BJ (cell line): ENCODE measurements at regions of chr10 and their contacts with region 1.

Region 1: DNA sequence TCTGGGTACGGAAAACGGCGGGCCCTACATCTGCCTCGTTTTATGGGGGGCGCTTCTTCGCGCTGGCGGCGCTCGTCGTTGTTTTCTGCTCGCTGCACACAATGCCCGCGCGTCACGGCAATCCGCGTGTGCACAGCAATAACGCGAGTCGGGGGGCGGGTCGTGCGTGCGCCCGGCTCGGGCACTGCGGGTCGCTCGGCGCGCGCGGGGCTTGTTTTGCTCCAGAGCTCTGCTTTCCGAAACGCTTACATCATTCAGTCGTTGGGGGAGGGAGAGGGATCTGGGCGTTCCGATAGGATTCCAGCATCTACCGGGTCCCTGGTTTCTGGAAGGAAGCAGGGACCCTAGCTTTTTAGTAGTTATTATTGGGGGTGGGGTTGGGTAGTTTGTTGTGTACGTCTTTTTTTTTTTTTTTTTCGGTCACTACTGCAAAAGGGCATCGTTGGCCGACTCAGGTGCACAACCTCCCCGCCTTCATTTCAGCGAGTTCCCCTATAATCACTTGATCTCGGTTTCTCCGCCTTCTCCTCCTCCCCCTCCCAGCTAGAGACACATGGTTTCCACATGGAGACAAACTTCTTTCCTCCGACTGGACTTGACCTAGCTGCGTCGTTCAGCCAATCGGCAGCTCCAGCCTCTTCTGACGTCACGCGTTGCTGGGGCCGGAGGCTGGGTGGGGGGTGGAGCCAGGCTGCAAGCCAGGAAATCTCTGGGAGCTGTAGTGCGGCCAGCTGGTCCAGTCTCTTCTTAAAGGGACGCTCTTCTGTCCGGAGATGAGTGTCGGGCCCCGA is 3.5 kb downstream of the MXI1 start:
- DNase-seq: peak; percentile 92
- H3K4me3 ChIP-seq: peak overlapping the region; percentile 75
- H3K27me3 ChIP-seq: no peaks in the 10 kb centered on the region
- CTCF ChIP-seq: no peak

Region 2: GRCh38 chr10:110058212-110058611 is 152.7 kb before region 1 on chr10:
- CTCF ChIA-PET with region 1: no interaction called
- POLR2A ChIA-PET with region 1: no interaction called
- DNase-seq: no peak
- H3K4me3 ChIP-seq: no peak overlapping the region
- H3K27me3 ChIP-seq: no peaks in the 10 kb centered on the region
- CTCF ChIP-seq: no peak

Region 3: DNA sequence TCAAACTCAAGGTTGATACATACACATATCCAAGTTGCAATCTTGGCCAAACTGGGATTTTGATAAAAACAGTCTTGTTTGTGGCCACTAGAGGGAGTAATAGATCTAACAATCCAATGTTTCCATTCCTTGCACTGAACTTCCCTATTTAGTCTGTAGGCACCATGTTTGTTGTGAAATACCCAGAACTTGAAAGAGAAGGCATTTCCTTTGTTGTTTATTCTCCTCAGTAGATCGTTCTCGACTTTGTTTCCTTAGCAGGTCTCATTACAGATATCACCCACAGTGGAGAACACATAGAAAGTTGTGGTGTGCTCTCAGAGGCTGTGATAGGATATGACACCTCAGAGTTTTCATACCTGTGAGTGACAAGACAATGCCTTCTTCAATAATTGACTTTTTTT is 73.7 kb before region 1 on chr10:
- CTCF ChIA-PET with region 1: interaction called, 15 read pairs
- POLR2A ChIA-PET with region 1: no interaction called
- DNase-seq: peak; percentile 26
- H3K4me3 ChIP-seq: no peak overlapping the region
- H3K27me3 ChIP-seq: no peaks in the 10 kb centered on the region
- CTCF ChIP-seq: peak; percentile 62

Region 4: GRCh38 chr10:110221721-110222261 is 10.9 kb after region 1 on chr10:
- CTCF ChIA-PET with region 1: interaction called, 10 read pairs
- POLR2A ChIA-PET with region 1: interaction called, 6 read pairs
- DNase-seq: peak; percentile 77
- H3K4me3 ChIP-seq: peak overlapping the region; percentile 48
- H3K27me3 ChIP-seq: no peaks in the 10 kb centered on the region
- CTCF ChIP-seq: peak; percentile 45

Region 5: GRCh38 chr10:110279407-110279986 is 68.6 kb after region 1 on chr10:
- CTCF ChIA-PET with region 1: interaction called, 11 read pairs
- POLR2A ChIA-PET with region 1: no interaction called
- DNase-seq: no peak
- H3K4me3 ChIP-seq: no peak overlapping the region
- H3K27me3 ChIP-seq: no peaks in the 10 kb centered on the region
- CTCF ChIP-seq: peak; percentile 71

Region 6: DNA sequence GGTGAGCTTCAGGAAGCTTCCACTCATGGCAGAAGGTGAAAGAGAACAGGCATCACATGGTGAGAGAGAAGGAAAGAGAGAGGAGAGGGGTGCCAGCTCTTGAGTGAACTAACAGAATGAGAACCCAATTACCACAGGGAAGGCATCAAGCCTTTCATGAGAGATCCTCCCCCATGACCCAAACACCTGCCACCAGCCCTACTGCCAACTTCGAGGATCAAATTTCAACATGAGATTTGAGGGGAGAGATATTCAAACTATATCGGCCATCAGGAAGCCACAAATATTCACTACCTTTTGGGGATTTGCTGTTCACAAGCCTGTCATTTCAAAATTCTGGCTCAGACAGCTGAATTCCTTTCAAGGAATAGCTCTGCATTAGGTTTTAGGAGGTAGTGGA is 133.8 kb after region 1 on chr10:
- CTCF ChIA-PET with region 1: no interaction called
- POLR2A ChIA-PET with region 1: interaction called, 15 read pairs
- DNase-seq: no peak
- H3K4me3 ChIP-seq: no peak overlapping the region
- H3K27me3 ChIP-seq: no peaks in the 10 kb centered on the region
- CTCF ChIP-seq: no peak

Region 7: GRCh38 chr10:110420401-110421193 is 209.7 kb after region 1 on chr10:
- CTCF ChIA-PET with region 1: no interaction called
- POLR2A ChIA-PET with region 1: no interaction called
- DNase-seq: no peak
- H3K4me3 ChIP-seq: no peak overlapping the region
- H3K27me3 ChIP-seq: no peaks in the 10 kb centered on the region
- CTCF ChIP-seq: no peak